ENCODE measurements at regions of chr17 and their contacts with region 1.

Region 1: GRCh38 chr17:74245145-74245831 is 28.7 kb upstream of the DNAI2 start:
- DNase-seq: peak; percentile 47 to 73
- H3K4me3 ChIP-seq: peak overlapping the region in 1 of 4 experiments; percentile 13; a peak in 3 of 8 replicates
- H3K27ac ChIP-seq: no peak overlapping the region
- H3K4me1 ChIP-seq: peaks cover 8 to 19% (median 15%) of the 10 kb centered on the region in 4 experiments
- H3K27me3 ChIP-seq: no peaks in the 10 kb centered on the region
- CTCF ChIP-seq: peak; percentile 16 to 32 (median 24); a peak in 3 of 4 replicates
- EP300 ChIP-seq: 0 out of 3 replicates have a peak, but pooled peaks of 1 of the 2 experiments have one; percentile 48
- POLR2A ChIP-seq: no peak
- RAD21 ChIP-seq: no peak

Region 2: DNA sequence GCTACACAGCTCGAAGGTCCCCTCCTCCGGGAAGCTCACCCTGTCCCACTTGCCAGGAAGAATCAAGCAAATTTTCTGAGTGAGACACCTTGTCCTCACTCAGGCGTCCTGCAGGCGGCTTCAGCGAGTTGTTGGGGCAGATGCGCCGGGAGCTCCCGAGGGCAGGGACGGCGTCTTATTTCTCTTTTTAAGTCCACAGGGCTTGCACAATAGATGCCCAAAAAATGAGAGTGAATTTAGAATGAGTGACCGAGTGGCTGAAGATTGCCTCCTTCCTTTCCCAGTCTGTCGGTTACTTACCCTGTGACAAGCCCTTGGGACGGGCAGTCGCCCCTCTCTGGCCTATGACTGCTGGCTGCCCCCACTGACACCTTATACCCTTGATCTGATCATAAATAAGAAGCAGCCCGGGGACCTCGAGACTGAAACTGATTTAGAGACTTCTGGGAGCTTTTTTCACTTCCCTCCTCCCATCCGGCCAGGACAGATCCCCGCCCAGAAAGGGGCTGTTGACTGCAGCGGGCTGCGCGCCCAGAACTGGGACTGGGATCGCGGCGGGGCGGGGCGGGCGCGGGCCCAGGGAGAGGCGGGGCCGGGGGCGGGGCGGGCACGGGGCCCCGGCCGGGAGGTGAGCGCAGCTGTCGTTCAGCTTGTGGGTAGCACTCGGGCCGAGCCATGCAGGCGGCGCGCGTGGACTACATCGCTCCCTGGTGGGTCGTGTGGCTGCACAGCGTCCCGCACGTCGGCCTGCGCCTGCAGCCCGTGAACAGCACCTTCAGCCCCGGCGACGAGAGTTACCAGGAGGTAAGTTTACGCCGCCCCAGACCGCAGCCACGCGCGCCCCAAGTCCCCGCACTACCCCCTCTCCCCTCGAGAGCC is 32.1 kb before region 1 on chr17 and contains the start of gene TTYH2:
- CTCF ChIA-PET with region 1: interaction called, 6 read pairs
- POLR2A ChIA-PET with region 1: interaction called, 61 read pairs
- DNase-seq: peak in 1 of 2 experiments; percentile 81
- H3K4me3 ChIP-seq: peak within 1 kb of the TSS; percentile 56 to 64 (median 62)
- H3K27ac ChIP-seq: no peak within 1 kb of the TSS
- H3K4me1 ChIP-seq: peaks cover 8 to 21% (median 20%) of the 10 kb centered on the region in 4 experiments
- H3K27me3 ChIP-seq: peaks cover 2 to 20% (median 11%) of the 10 kb centered on the region in 4 experiments; a peak in 6 of 7 replicates
- CTCF ChIP-seq: peak; percentile 28 to 39 (median 38); a peak in 3 of 4 replicates
- EP300 ChIP-seq: 0 out of 3 replicates have a peak, but pooled peaks of 1 of the 2 experiments have one; percentile 35
- POLR2A ChIP-seq: no peak
- RAD21 ChIP-seq: peak in 1 of 2 experiments; percentile 15; a peak in 1 of 4 replicates
- total RNA-seq, gene TTYH2: 3.2 and 3.7 TPM in 2 replicates

Region 3: GRCh38 chr17:74259667-74260524 is 14.6 kb after region 1 on chr17:
- CTCF ChIA-PET with region 1: interaction called, 7 read pairs
- POLR2A ChIA-PET with region 1: interaction called, 12 read pairs
- DNase-seq: peak in 1 of 2 experiments; percentile 56
- H3K4me3 ChIP-seq: peak overlapping the region in 2 of 4 experiments; percentile 2 to 25; a peak in 1 of 8 replicates
- H3K27ac ChIP-seq: no peak overlapping the region
- H3K4me1 ChIP-seq: peaks cover 0 to 21% (median 13%) of the 10 kb centered on the region in 4 experiments; a peak in 6 of 7 replicates
- H3K27me3 ChIP-seq: no peaks in the 10 kb centered on the region
- CTCF ChIP-seq: peak in 2 of 3 experiments; percentile 28 to 34; a peak in 3 of 4 replicates
- EP300 ChIP-seq: no peak
- POLR2A ChIP-seq: no peak
- RAD21 ChIP-seq: peak in 1 of 2 experiments; percentile 34; a peak in 1 of 4 replicates

Region 4: DNA sequence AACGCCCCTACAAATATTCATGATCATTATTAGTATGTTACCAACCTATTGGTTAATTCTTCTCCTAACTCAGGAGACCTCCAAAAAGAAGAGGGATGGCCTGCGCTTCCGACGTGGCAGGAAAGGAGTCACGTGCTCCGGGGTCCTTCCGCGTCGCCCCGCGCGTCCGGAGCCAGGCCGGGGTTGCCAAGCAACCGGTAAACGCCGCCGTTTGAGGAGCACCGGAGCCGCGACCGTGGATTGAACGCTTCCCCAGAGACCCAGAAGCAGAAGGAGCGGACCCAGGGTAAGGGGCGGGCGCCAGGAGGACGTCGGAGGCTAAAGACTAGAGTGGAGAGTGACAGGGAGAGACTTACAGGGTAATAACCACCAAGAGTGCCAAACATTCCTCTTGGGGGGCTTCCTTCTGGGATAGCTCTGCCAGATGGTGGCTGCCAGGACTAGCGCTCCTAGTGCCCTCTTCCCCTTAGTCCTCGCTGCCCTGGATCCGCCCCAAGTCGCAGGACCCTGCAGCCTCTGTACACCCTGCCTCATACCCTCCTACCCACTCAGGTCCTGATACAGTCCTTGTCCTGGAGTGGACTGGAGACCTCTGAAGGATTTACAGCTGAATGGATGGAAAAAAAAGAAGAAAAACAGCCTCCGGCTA is 28.9 kb after region 1 on chr17 and contains the start of gene DNAI2:
- CTCF ChIA-PET with region 1: interaction called, 10 read pairs
- POLR2A ChIA-PET with region 1: interaction called, 3 read pairs
- DNase-seq: peak in 1 of 2 experiments; percentile 73
- H3K4me3 ChIP-seq: peak within 1 kb of the TSS; percentile 21 to 50 (median 28); a peak in 7 of 8 replicates
- H3K27ac ChIP-seq: no peak within 1 kb of the TSS
- H3K4me1 ChIP-seq: peaks cover 0 to 5% (median 3%) of the 10 kb centered on the region in 4 experiments; a peak in 6 of 7 replicates
- H3K27me3 ChIP-seq: peaks cover 0 to 17% (median 15%) of the 10 kb centered on the region in 4 experiments; a peak in 6 of 7 replicates
- CTCF ChIP-seq: no peak
- EP300 ChIP-seq: no peak
- POLR2A ChIP-seq: no peak
- RAD21 ChIP-seq: no peak
- total RNA-seq, gene DNAI2: 0.15 TPM in 1 of 2 replicates, not detected in the other

Measured in H1 (cell line).